HepG2 (cell line): ENCODE measurements at regions of chr20 and their contacts with region 1.

Region 1: GRCh38 chr20:36285746-36286447 is 20.2 kb upstream of the DLGAP4 start:
- DNase-seq: no peak
- ATAC-seq: peak; percentile 80
- H3K4me3 ChIP-seq: no peak overlapping the region
- H3K27ac ChIP-seq: no peak overlapping the region
- H3K4me1 ChIP-seq: no peaks in the 10 kb centered on the region
- H3K27me3 ChIP-seq: no peaks in the 10 kb centered on the region; a peak in 1 of 5 replicates
- CTCF ChIP-seq: no peak
- EP300 ChIP-seq: no peak
- POLR2A ChIP-seq: no peak
- RAD21 ChIP-seq: no peak

Region 2: GRCh38 chr20:35917077-35917476 is 368.8 kb before region 1 on chr20:
- CTCF ChIA-PET with region 1: no interaction called
- POLR2A ChIA-PET with region 1: no interaction called
- in situ Hi-C with region 1: no loop called
- intact Hi-C with region 1: no loop called
- DNase-seq: no peak
- ATAC-seq: no peak
- H3K4me3 ChIP-seq: no peak overlapping the region
- H3K27ac ChIP-seq: no peak overlapping the region
- H3K4me1 ChIP-seq: no peaks in the 10 kb centered on the region
- H3K27me3 ChIP-seq: no peaks in the 10 kb centered on the region
- CTCF ChIP-seq: no peak
- EP300 ChIP-seq: no peak
- POLR2A ChIP-seq: no peak
- RAD21 ChIP-seq: no peak

Region 3: GRCh38 chr20:36303020-36303595 is 17.2 kb after region 1 on chr20:
- CTCF ChIA-PET with region 1: no interaction called
- POLR2A ChIA-PET with region 1: no interaction called
- in situ Hi-C with region 1: no loop called
- intact Hi-C with region 1: no loop called
- DNase-seq: no peak
- ATAC-seq: no peak
- H3K4me3 ChIP-seq: no peak overlapping the region
- H3K27ac ChIP-seq: no peak overlapping the region
- H3K4me1 ChIP-seq: no peaks in the 10 kb centered on the region
- H3K27me3 ChIP-seq: peaks cover 5 to 51% of the 10 kb centered on the region in 2 experiments
- CTCF ChIP-seq: no peak
- EP300 ChIP-seq: no peak
- POLR2A ChIP-seq: no peak
- RAD21 ChIP-seq: no peak

Region 4: DNA sequence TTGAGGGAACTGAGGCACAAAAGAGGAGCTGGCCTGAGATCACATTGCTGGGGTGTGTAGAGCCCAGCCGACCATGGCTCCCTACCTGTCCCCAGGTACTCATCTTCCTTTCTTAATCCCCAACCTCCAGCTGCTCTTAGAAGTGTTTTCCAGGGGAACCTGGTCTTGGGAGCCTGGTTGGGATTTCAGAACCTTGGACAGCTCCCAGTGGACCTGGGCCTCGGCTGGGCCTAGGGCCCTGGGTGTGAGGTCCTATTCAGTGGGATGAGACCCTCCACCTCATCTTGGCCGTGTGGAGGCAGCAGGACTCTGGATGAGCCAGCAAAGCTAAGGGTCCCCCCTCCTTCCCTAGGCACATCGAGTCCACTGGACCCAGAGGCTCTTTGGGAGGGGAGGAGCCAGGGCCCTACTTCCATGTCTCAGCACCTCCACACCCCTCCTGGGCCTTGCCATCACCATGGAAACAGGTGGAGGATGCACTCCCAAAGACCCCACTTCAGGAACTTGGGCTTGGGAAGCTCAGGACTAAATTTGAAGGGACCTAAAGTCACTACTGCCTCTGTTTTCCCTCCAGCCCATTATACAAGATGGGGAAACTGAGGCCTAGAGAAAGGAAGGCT is 58.7 kb after region 1 on chr20:
- CTCF ChIA-PET with region 1: no interaction called
- POLR2A ChIA-PET with region 1: no interaction called
- in situ Hi-C with region 1: loop called (anchors 10 kb)
- intact Hi-C with region 1: no loop called
- DNase-seq: peak; percentile 59
- ATAC-seq: peak; percentile 75
- H3K4me3 ChIP-seq: no peak overlapping the region
- H3K27ac ChIP-seq: no peak overlapping the region
- H3K4me1 ChIP-seq: no peaks in the 10 kb centered on the region
- H3K27me3 ChIP-seq: peaks cover 0 to 16% of the 10 kb centered on the region in 2 experiments; a peak in 1 of 5 replicates
- CTCF ChIP-seq: no peak
- EP300 ChIP-seq: no peak
- POLR2A ChIP-seq: no peak
- RAD21 ChIP-seq: no peak

Region 5: DNA sequence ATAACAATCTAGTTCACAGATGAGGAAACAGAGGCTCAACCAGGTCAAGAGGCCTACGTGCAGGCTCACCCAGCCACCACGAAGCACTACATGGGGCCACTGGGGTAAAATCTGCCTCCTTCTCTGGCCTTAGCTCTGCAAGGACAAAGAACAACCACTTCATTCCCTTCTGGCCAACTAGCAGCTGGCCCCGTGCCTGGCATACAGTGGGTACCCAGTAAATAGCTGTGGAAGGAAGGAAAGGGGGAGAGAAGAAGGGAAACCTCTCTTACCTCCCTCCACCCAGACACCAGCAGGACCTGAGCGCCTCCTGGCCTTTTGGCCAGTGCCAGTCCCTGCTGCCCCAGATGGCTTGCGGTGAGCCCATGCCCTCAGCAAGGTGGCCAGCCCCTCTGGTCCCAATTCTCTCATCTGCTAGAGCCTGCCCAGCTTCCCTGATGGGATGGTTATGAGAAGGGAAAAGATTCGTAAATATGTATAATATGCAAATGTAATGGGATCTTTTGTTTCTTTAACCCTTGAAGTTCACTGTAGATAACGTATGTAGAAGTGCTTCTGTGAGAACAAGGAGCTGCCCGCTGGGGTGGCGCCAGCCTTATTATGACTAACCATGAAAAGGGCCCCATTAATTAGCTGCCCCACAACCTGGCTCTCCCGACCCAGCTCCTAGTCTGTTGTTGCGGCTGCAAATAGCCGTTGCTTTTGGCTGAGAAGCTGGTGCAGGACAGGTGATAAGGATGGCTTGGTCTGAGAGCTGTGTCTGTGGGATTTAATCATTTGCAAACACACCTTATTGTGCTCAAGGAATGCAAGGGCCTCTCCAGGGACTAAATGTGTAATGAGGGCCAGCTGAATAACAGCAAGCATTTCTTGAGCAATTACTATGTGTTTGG is 82.3 kb after region 1 on chr20:
- CTCF ChIA-PET with region 1: no interaction called
- POLR2A ChIA-PET with region 1: no interaction called
- in situ Hi-C with region 1: no loop called
- intact Hi-C with region 1: no loop called
- DNase-seq: no peak
- ATAC-seq: no peak
- H3K4me3 ChIP-seq: no peak overlapping the region
- H3K27ac ChIP-seq: no peak overlapping the region
- H3K4me1 ChIP-seq: peaks cover 2% of the 10 kb centered on the region
- H3K27me3 ChIP-seq: peaks cover 2 to 28% of the 10 kb centered on the region in 2 experiments; a peak in 3 of 5 replicates
- CTCF ChIP-seq: no peak
- EP300 ChIP-seq: no peak
- POLR2A ChIP-seq: no peak
- RAD21 ChIP-seq: no peak